Left cardiac atrium (tissue), 4 donors: ENCODE measurements at regions of chr18 and their contacts with region 1.

Region 1: DNA sequence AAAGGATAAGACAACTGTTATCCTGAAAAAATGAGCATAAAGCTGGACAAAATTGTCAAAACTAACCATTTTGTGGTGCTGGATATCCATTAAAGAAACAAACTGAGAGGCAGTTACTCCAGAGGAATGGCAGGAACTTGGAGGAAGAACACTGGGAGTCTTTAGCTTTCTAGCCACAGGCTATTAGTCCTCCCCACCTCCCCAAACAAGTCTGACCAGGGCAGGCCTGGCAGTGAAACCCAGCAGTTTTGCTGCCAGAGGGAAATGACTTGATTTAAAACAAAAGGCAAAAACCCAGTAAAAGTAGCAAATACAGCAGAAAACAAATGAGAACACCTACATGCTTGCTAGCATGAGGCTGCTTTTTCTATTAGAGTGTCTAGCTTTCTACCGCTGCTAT is 34.9 kb downstream of the OSBPL1A start:
- DNase-seq: no peak
- ATAC-seq: no peak

Region 2: GRCh38 chr18:24296276-24296675 is 66.5 kb before region 1 on chr18:
- intact Hi-C with region 1: no loop called
- DNase-seq: no peak
- ATAC-seq: no peak

Region 3: DNA sequence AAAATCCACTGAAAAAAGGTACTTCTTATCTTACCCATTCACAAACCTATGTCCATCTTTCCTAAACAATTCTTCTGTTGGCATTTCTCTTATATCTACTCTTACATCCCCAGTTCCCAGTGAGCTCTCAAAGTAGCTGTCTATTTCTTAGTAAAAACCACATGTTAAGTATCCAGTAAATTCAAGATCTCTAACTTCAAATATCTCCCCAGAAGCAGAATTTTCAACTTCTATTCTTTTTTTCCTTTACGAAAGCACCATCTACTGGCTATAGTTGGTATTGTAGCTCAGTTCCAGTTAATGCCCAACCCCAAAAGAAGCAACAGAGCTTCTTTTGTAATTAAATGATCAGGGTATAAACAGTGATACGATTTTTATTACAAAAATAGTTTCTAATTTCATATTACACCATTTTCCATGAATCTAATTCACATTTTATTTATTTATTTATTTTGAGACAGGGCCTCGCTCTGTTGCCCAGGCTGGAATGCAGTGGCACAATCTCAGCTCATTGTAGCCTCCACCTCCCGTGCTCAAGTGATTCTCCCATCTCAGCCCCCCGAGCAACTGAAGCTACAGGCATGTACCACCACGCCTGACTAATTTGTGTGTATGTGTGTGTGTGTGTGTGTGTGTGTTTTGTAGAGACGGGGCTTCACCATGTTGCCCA is 126.2 kb after region 1 on chr18:
- intact Hi-C with region 1: loop called (anchors 2 to 5 kb)
- DNase-seq: no peak
- ATAC-seq: peak in 1 of 2 donors; percentile 53